CD4-positive, alpha-beta T cell (primary cell): ENCODE measurements at regions of chr17 and their contacts with region 1.

Region 1: DNA sequence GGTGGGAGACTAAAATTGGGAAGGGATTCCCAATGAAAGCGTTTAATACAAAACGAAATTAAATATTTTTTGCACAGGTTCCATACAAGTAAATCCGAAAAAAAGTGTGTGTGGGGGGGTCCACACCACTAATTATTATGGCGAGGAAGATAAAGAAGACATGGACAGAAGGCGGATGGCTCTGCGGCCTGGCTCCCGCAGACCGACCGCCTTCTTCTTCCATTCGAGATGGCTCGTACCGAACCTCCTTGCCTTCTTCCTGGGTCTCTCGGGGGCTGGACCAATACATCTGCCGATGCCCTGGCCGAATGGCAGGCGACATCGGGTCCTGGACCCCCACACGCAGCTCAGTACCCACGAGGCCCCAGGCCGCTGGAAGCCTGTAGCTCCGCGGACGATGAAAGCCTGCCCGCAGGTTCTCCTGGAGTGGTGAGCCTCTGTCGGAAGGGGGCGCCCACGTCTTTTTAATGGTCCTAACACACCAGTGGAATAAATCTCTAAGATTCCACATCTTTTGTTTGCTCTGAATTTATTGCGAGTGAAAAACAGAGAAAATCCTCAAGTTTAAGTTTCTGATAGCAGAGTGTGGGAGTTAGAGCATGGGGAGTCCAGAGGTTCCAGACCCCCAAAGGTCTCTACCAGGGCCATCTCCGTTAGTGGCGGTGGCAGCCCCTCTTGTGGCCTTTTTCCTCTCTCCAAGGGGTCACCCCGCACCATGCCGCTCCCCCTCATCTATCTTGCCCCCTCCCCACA is 1.4 kb downstream of the PRAC2 start:
- DNase-seq: peak; percentile 56 to 84 (median 74)
- ATAC-seq: peak; percentile 76
- H3K4me3 ChIP-seq: peak overlapping the region; percentile 11
- H3K4me3 Mint-ChIP-seq: peak overlapping the region; percentile 63
- H3K27ac ChIP-seq: no peak overlapping the region
- H3K27ac Mint-ChIP-seq: no peak overlapping the region
- H3K4me1 ChIP-seq: peaks cover 70% of the 10 kb centered on the region
- H3K4me1 Mint-ChIP-seq: peaks cover 50% of the 10 kb centered on the region
- H3K27me3 ChIP-seq: peaks cover 99 to 100% of the 10 kb centered on the region in 2 experiments
- H3K27me3 Mint-ChIP-seq: peaks cover 100% of the 10 kb centered on the region
- CTCF ChIP-seq: peak; percentile 71

Region 2: DNA sequence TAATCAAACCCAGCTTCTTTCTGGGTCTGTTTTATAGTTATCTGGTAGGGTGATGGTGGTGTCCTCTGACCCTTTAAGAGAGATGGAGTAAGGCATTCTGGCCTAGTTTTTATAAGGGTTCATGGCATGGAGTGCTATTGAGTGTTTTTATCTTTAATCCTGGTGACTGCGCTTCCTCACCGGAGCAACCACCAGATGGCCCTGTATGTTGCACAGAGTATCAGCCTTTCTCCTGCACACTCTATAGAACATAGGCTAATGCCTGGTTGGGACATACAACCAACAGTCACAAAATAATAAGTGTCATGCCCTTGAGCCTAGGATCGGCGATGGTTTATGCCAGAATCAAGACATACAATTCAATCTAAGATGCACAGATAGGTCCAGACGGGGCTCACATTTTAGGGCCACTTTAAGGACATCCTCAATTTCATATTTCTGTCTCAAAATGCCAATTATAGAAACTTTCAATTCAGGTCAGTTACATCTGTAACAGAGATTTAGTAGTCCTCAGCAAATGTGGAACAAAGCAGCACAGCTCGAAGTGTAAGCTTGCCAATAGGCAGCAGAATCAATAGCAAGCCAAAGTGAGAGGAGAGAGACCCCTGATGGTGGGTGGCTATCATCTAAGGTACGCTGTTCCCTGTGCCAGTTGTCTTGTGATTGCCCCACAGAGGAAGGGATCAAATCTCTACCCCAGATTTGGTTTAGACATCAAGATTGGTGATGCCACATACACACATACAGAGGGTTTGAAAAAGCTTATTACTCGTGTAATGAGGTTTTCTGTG is 61.1 kb before region 1 on chr17:
- CTCF ChIA-PET with region 1: no interaction called
- POLR2A ChIA-PET with region 1: no interaction called
- intact Hi-C with region 1: no loop called
- DNase-seq: no peak
- ATAC-seq: no peak
- H3K4me3 ChIP-seq: no peak overlapping the region
- H3K4me3 Mint-ChIP-seq: no peak overlapping the region
- H3K27ac ChIP-seq: no peak overlapping the region
- H3K27ac Mint-ChIP-seq: no peak overlapping the region
- H3K4me1 ChIP-seq: no peaks in the 10 kb centered on the region
- H3K4me1 Mint-ChIP-seq: no peaks in the 10 kb centered on the region
- H3K27me3 ChIP-seq: peaks cover 6% of the 10 kb centered on the region in 2 experiments
- H3K27me3 Mint-ChIP-seq: peaks cover 41% of the 10 kb centered on the region
- CTCF ChIP-seq: no peak

Region 3: GRCh38 chr17:48747445-48748363 is 23.3 kb after region 1 on chr17:
- CTCF ChIA-PET with region 1: interaction called, 6 read pairs
- POLR2A ChIA-PET with region 1: interaction called, 3 read pairs
- intact Hi-C with region 1: loop called (anchors 2 kb)
- DNase-seq: no peak
- ATAC-seq: no peak
- H3K4me3 ChIP-seq: no peak overlapping the region
- H3K4me3 Mint-ChIP-seq: no peak overlapping the region
- H3K27ac ChIP-seq: no peak overlapping the region
- H3K27ac Mint-ChIP-seq: no peak overlapping the region
- H3K4me1 ChIP-seq: peaks cover 23% of the 10 kb centered on the region
- H3K4me1 Mint-ChIP-seq: peaks cover 16% of the 10 kb centered on the region
- H3K27me3 ChIP-seq: peaks cover 88 to 98% of the 10 kb centered on the region in 2 experiments
- H3K27me3 Mint-ChIP-seq: peaks cover 97% of the 10 kb centered on the region
- CTCF ChIP-seq: no peak

Region 4: GRCh38 chr17:48791128-48792032 is 67.0 kb after region 1 on chr17:
- CTCF ChIA-PET with region 1: interaction called, 8 read pairs
- POLR2A ChIA-PET with region 1: no interaction called
- intact Hi-C with region 1: loop called in 1 of 2 experiments (anchors 1 kb)
- DNase-seq: peak in 5 of 14 experiments; percentile 4 to 54 (median 37)
- ATAC-seq: no peak
- H3K4me3 ChIP-seq: no peak overlapping the region
- H3K4me3 Mint-ChIP-seq: no peak overlapping the region
- H3K27ac ChIP-seq: no peak overlapping the region
- H3K27ac Mint-ChIP-seq: no peak overlapping the region
- H3K4me1 ChIP-seq: peaks cover 6% of the 10 kb centered on the region
- H3K4me1 Mint-ChIP-seq: no peaks in the 10 kb centered on the region
- H3K27me3 ChIP-seq: peaks cover 13 to 21% of the 10 kb centered on the region in 2 experiments
- H3K27me3 Mint-ChIP-seq: peaks cover 72% of the 10 kb centered on the region
- CTCF ChIP-seq: no peak

Region 5: GRCh38 chr17:48997083-48997826 is 272.8 kb after region 1 on chr17 and contains the start of gene IGF2BP1:
- CTCF ChIA-PET with region 1: no interaction called
- POLR2A ChIA-PET with region 1: no interaction called
- intact Hi-C with region 1: loop called in 1 of 2 experiments (anchors 5 kb)
- DNase-seq: peak in 3 of 14 experiments; percentile 26 to 48 (median 47)
- ATAC-seq: peak; percentile 38
- H3K4me3 ChIP-seq: peak within 1 kb of the TSS; percentile 24
- H3K4me3 Mint-ChIP-seq: peak within 1 kb of the TSS; percentile 72
- H3K27ac ChIP-seq: no peak within 1 kb of the TSS
- H3K27ac Mint-ChIP-seq: no peak within 1 kb of the TSS
- H3K4me1 ChIP-seq: peaks cover 36% of the 10 kb centered on the region
- H3K4me1 Mint-ChIP-seq: peaks cover 35% of the 10 kb centered on the region
- H3K27me3 ChIP-seq: peaks cover 60 to 96% of the 10 kb centered on the region in 2 experiments
- H3K27me3 Mint-ChIP-seq: peaks cover 92% of the 10 kb centered on the region
- CTCF ChIP-seq: no peak
- total RNA-seq, gene IGF2BP1: not detected

Region 6: GRCh38 chr17:49315551-49316257 is 591.3 kb after region 1 on chr17:
- CTCF ChIA-PET with region 1: no interaction called
- POLR2A ChIA-PET with region 1: no interaction called
- intact Hi-C with region 1: no loop called
- DNase-seq: peak; percentile 66 to 89 (median 72)
- ATAC-seq: peak; percentile 99
- H3K4me3 ChIP-seq: no peak overlapping the region
- H3K4me3 Mint-ChIP-seq: peak overlapping the region; percentile 82
- H3K27ac ChIP-seq: no peak overlapping the region
- H3K27ac Mint-ChIP-seq: peak overlapping the region; percentile 40
- H3K4me1 ChIP-seq: peaks cover 3% of the 10 kb centered on the region
- H3K4me1 Mint-ChIP-seq: peaks cover 30% of the 10 kb centered on the region
- H3K27me3 ChIP-seq: no peaks in the 10 kb centered on the region
- H3K27me3 Mint-ChIP-seq: no peaks in the 10 kb centered on the region
- CTCF ChIP-seq: peak; percentile 85